ENCODE measurements at regions of chr22 and their contacts with region 1.

Region 1: GRCh38 chr22:50244420-50245213 is at the start of gene TUBGCP6:
- DNase-seq: peak; percentile 95
- ATAC-seq: peak; percentile 81
- H3K4me3 Mint-ChIP-seq: peak within 1 kb of the TSS; percentile 95
- H3K27ac Mint-ChIP-seq: peak within 1 kb of the TSS; percentile 99
- H3K4me1 Mint-ChIP-seq: peaks cover 41% of the 10 kb centered on the region
- H3K27me3 Mint-ChIP-seq: no peaks in the 10 kb centered on the region
- total RNA-seq, gene TUBGCP6: 53.2 to 58.1 TPM

Region 2: DNA sequence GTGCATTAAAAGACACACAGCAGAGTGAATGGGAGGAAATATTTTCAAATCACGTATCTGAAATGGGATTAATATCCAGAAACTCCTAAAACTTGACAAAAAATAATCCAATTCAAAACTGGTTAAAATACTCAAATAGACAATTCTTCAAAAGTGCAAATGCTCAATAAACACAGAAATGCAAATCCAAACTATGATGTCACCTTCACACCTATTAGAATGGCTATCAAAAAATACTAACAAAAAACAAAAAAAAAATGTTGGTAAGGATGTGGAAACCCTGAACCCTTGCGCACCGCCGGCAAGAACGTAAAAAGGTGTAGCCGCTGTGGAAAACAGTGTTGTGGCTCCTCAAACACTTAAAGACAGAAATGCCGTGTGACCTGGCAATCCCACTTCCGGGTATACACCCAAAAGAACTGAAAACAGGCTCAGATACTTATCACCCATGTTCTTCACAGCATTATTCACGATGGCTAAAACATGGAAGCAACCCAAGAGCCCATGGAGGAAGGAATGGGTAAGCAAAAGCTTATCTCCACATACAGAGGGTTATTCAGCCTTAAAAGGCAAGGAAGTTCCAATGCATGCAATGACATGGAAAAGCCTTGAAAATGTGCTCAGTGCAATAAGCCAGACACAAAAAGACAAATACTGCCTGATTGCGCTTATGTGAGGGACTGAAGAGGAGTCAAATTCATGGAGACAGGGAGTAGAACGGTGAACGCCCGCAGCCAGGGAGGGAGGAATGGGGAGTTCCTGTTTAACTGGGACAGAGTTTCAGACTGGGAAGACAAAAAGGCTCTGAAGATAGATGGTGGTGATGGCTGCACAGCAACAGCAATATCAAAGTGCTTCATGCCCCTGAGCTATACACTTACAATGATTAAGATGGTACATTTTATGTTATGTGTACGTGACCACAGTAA is 436.6 kb before region 1 on chr22:
- CTCF ChIA-PET with region 1: no interaction called
- POLR2A ChIA-PET with region 1: no interaction called
- DNase-seq: peak; percentile 79
- ATAC-seq: peak; percentile 82
- H3K4me3 Mint-ChIP-seq: peak overlapping the region; percentile 60
- H3K27ac Mint-ChIP-seq: peak overlapping the region; percentile 88
- H3K4me1 Mint-ChIP-seq: peaks cover 80% of the 10 kb centered on the region
- H3K27me3 Mint-ChIP-seq: no peaks in the 10 kb centered on the region

Region 3: DNA sequence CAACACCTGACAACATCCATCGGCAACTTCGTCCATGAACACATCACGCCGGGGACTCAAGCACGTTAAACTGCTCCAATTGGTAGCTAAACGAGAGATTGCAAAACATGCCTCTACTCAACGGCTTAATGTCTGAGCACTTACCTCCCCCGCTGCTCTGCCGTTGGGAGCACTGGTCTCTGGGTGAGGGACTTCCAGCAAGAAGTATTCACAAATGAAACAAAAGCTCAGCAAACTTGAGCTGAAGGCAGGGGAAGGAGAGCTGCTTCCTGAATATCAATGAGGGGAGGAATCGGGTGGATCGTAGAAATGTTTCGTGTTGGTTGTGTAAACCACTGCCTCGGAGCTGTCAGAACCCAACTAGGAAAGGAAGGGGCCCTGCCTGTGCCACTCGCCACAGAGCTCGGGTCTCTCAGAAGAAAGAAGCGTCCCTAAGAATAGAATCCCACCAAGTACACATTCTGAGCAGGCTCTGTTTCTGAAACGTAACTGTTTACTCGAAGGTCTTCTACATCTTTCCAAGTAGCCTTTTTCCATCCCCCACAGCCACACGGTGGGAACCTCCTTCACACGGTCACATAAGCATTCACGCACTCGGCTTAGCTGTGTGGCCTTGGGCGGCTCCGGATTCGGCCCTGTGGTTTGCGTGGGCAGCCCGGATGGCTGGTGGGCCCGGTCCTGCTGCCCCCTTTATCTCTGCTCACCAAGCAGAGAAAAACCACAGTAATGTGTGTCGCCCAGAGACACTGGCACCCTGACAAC is 159.2 kb before region 1 on chr22 and contains the start of gene MLC1:
- CTCF ChIA-PET with region 1: no interaction called
- POLR2A ChIA-PET with region 1: no interaction called
- DNase-seq: peak; percentile 53
- ATAC-seq: no peak
- H3K4me3 Mint-ChIP-seq: no peak within 1 kb of the TSS
- H3K27ac Mint-ChIP-seq: no peak within 1 kb of the TSS
- H3K4me1 Mint-ChIP-seq: peaks cover 3% of the 10 kb centered on the region
- H3K27me3 Mint-ChIP-seq: no peaks in the 10 kb centered on the region
- total RNA-seq, gene MLC1: 8.3 to 9.4 TPM

Region 4: GRCh38 chr22:50218996-50219727 is 25.5 kb before region 1 on chr22:
- CTCF ChIA-PET with region 1: no interaction called
- POLR2A ChIA-PET with region 1: no interaction called
- DNase-seq: no peak
- ATAC-seq: no peak
- H3K4me3 Mint-ChIP-seq: no peak overlapping the region
- H3K27ac Mint-ChIP-seq: no peak overlapping the region
- H3K4me1 Mint-ChIP-seq: peaks cover 3% of the 10 kb centered on the region
- H3K27me3 Mint-ChIP-seq: no peaks in the 10 kb centered on the region

Region 5: DNA sequence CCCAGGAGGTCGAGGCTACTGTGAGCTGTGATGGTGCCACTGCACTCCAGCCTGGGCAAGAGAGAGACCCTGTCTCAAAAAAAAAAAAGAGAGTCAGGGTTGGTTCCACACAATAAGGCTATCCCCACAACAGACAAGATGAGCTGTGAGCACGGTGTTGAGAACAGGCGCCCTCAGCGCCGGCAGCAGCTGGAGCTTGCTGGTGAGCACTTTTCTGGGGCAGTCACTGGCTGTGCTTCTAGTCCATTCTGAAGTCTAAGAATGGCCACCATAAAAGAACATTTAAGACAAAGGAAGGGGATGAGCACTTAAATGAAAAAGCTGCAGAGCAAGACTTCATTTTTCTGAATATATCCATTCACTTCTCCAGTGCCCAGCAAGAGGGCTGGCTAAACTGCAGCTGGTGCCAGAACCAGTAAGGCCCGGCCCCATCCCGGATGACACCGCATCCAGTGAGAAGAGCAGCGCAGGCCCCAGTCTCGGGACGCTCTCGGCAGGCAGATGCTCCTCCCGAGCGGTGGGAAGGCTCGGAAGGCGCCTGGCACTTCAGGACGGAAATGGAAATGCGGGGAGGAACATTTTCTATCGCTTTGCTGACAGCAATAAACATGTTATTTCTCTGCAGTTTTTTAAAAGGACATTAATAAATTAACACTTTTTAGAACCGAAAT is 12.0 kb before region 1 on chr22:
- CTCF ChIA-PET with region 1: interaction called, 10 read pairs
- POLR2A ChIA-PET with region 1: no interaction called
- DNase-seq: no peak
- ATAC-seq: no peak
- H3K4me3 Mint-ChIP-seq: no peak overlapping the region
- H3K27ac Mint-ChIP-seq: no peak overlapping the region
- H3K4me1 Mint-ChIP-seq: peaks cover 11% of the 10 kb centered on the region
- H3K27me3 Mint-ChIP-seq: no peaks in the 10 kb centered on the region

Region 6: DNA sequence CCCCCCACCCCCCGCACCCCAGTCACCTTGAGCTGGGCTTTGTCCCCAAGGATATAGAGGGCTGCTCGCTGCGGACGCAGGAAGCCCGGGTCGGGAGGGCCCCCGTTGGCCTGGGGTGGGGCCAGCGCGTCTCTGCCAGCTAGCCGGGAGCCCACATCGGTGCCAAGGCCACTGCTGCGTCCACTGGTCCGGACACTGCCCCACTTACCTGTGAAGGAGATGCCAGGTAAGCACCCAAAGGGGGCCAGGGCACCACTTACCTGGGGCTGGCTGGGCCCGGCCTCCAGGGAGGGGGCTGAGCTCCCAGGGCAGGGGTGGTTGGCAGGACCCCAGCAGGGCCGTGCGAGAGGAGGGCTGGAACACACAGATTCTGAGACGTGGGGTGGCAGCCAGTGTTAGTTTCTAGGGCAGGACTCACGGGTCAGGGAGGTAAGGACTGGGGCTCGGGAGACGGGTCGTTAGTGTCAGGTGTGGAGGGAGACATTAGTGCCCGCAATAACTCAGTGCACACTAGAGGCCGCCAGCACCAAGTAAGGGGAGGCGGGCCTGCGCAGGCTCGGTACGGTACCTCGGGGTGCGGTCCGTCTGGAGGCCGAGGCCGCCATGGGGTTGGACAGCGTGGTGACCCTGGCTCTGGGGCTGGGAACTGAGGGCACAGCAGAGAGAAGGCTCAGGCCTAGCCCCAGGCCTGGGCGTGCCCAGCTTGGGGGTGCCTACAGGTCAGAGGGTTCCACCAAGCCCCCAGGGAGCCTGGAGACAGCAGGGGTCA is 212.0 kb after region 1 on chr22:
- CTCF ChIA-PET with region 1: no interaction called
- POLR2A ChIA-PET with region 1: no interaction called
- DNase-seq: no peak
- ATAC-seq: peak; percentile 34
- H3K4me3 Mint-ChIP-seq: no peak overlapping the region
- H3K27ac Mint-ChIP-seq: no peak overlapping the region
- H3K4me1 Mint-ChIP-seq: peaks cover 2% of the 10 kb centered on the region
- H3K27me3 Mint-ChIP-seq: no peaks in the 10 kb centered on the region

Measured in activated CD8-positive, alpha-beta T cell treated with anti-CD3 and anti-CD28 coated beads, Interleukin-2, amount 10 ng/mL, durations not matched to agents 7 days and 5 days (primary cell).